Mammary epithelial cell (primary cell): ENCODE measurements at regions of chr17 and their contacts with region 1.

Region 1: DNA sequence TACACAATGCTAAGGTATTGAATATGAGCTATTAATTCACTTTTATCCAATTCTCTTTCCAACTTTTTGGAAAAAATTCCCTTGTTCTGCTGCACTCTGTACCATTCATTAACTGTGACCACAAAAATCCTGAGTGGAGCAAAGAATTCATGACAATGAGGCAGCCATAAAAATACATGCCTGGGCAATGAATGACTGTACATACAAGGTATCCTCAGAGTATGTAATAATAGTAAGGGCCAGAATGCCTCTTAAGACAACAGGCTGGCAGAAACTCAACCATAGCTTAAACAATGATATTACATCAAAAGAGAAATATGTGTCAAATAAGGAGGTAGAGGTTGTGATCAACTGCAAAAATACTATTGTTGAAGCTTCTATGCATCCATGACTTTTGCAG is 74.7 kb upstream of the CA10 start:
- DNase-seq: peak; percentile 76
- H3K4me3 ChIP-seq: no peak overlapping the region
- H3K27ac ChIP-seq: peak overlapping the region; percentile 57
- H3K4me1 ChIP-seq: peaks cover 47% of the 10 kb centered on the region
- H3K27me3 ChIP-seq: no peaks in the 10 kb centered on the region
- CTCF ChIP-seq: no peak

Region 2: GRCh38 chr17:52158450-52159042 is 74.6 kb before region 1 on chr17 and contains the start of gene CA10:
- CTCF ChIA-PET with region 1: no interaction called
- dilution Hi-C with region 1: no loop called
- in situ Hi-C with region 1: no loop called
- intact Hi-C with region 1: loop called (anchors 5 kb)
- DNase-seq: no peak
- H3K4me3 ChIP-seq: peak within 1 kb of the TSS; percentile 41 to 60 (median 45)
- H3K27ac ChIP-seq: no peak within 1 kb of the TSS
- H3K4me1 ChIP-seq: peaks cover 25% of the 10 kb centered on the region
- H3K27me3 ChIP-seq: peaks cover 24% of the 10 kb centered on the region
- CTCF ChIP-seq: no peak
- total RNA-seq, gene CA10: 0.85 TPM in 1 of 2 donors, not detected in the other